Dendritic cell treated with granulocyte-macrophage colony-stimulating factor and Interleukin-4, amounts not matched to agents 40 ng/mL and 50 ng/mL, for 4 days (primary cell): ENCODE measurements at regions of chrX and their contacts with region 1.

Region 1: DNA sequence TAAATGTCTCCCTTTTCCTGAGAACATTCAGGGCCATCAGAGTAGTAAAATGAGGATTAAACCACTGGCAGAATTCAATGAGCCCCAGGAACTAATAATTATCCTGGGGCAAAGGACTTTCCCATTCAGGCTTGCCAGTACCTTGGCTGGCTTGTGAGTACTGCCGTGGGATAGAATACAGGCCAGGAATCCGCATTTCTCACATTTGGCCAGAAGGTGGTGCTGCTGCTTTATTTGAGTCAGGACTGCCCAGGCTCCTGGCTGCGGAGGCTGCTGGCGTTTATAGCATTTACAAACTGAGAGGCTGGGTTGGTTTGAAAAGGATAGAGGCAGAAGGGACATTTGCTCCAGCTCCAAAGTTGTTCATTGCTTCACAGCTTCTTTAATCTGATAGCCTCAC is 91.4 kb downstream of the RTL9 start:
- H3K4me3 Mint-ChIP-seq: no peak overlapping the region
- H3K27ac Mint-ChIP-seq: no peak overlapping the region
- H3K4me1 Mint-ChIP-seq: no peaks in the 10 kb centered on the region
- H3K27me3 Mint-ChIP-seq: peaks cover 10% of the 10 kb centered on the region

Region 2: GRCh38 chrX:110210417-110211139 is 239.5 kb before region 1 on chrX:
- intact Hi-C with region 1: no loop called
- H3K4me3 Mint-ChIP-seq: no peak overlapping the region
- H3K27ac Mint-ChIP-seq: no peak overlapping the region
- H3K4me1 Mint-ChIP-seq: no peaks in the 10 kb centered on the region
- H3K27me3 Mint-ChIP-seq: no peaks in the 10 kb centered on the region

Region 3: DNA sequence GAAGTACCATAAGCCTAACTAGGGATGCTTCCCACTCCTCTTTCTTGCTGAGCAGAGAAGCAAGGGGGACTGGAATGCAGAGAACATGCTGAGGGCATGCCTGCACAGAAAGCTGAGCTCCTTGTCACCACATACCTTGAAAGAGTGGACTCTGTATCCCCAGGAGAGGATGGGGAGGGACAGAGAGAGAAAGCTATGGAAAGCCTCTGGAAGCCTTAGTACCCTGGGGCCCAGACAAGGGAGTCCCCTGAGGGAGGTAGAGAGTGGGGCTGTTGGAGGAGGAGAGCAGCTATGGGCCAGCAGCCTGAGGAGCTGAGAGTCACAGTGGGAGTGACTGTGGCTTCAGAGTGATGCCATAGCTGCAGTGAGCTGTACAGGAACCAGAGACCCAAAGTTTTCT is 13.5 kb before region 1 on chrX:
- intact Hi-C with region 1: no loop called
- H3K4me3 Mint-ChIP-seq: no peak overlapping the region
- H3K27ac Mint-ChIP-seq: no peak overlapping the region
- H3K4me1 Mint-ChIP-seq: no peaks in the 10 kb centered on the region
- H3K27me3 Mint-ChIP-seq: peaks cover 4% of the 10 kb centered on the region

Region 4: GRCh38 chrX:110665223-110666002 is 215.4 kb after region 1 on chrX:
- intact Hi-C with region 1: loop called (anchors 10 kb)
- H3K4me3 Mint-ChIP-seq: no peak overlapping the region
- H3K27ac Mint-ChIP-seq: no peak overlapping the region
- H3K4me1 Mint-ChIP-seq: no peaks in the 10 kb centered on the region
- H3K27me3 Mint-ChIP-seq: no peaks in the 10 kb centered on the region

Region 5: GRCh38 chrX:110847334-110847733 is 397.3 kb after region 1 on chrX:
- intact Hi-C with region 1: loop called (anchors 1 kb)
- H3K4me3 Mint-ChIP-seq: no peak overlapping the region
- H3K27ac Mint-ChIP-seq: no peak overlapping the region
- H3K4me1 Mint-ChIP-seq: no peaks in the 10 kb centered on the region
- H3K27me3 Mint-ChIP-seq: no peaks in the 10 kb centered on the region